Activated CD4-positive, alpha-beta T cell treated with anti-CD3 and anti-CD28 coated beads, Interleukin-2, amount 10 ng/mL, durations not matched to agents 7 days and 5 days (primary cell): ENCODE measurements at regions of chr17 and their contacts with region 1.

Region 1: GRCh38 chr17:74748529-74749365 is at the start of gene NHERF1:
- DNase-seq: peak; percentile 93
- H3K4me3 Mint-ChIP-seq: peak within 1 kb of the TSS; percentile 92
- H3K27ac Mint-ChIP-seq: peak within 1 kb of the TSS; percentile 84
- H3K4me1 Mint-ChIP-seq: peaks cover 65% of the 10 kb centered on the region
- H3K27me3 Mint-ChIP-seq: no peaks in the 10 kb centered on the region
- total RNA-seq, gene NHERF1: 254 to 281 TPM

Region 2: DNA sequence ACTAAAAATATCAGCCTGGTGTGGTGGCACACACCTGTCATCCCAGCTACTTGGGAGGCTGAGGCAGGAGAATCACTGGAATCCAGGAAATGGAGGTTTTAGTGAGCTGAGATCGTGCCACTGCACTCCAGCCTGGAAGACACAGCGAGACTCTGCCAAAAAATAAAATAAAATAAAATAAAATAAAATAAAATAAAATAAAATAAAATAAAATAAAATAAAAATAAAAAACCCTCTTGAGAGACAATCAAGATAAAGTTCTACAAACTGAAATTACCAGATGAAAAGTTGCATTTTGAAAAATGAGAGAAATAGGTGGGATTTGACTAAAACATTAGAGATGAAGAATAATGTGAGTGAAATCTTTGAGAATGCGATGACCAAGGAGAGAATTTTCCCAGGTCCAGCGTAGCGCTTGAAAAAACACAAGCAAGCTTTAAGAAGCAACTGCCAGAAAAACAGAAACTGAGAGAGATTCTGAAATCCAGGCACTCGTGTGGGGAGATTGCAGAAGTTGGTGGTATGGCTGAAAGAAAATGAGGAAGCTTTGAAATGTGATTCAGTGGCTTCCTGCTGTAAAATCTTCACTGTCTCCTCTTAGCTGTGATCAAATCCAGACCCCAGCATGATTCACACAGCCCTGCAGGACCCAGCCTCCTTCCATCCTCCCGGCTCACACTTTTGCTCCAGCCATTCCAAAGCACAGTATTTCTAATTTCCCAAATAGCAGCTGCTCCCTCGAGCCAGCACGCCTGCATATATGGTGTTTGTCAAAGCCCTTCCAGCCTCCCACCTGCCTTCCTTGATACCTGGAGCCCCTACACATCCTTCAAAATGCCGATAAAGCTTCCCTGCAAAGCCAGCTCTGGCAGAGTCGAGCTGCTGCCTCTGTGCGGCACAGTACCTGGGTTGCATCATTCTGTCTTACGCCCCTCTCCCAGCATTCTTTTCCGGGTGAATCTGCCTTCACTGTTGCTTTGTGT is 117.0 kb before region 1 on chr17:
- CTCF ChIA-PET with region 1: no interaction called
- POLR2A ChIA-PET with region 1: no interaction called
- DNase-seq: no peak
- H3K4me3 Mint-ChIP-seq: no peak overlapping the region
- H3K27ac Mint-ChIP-seq: no peak overlapping the region
- H3K4me1 Mint-ChIP-seq: peaks cover 9% of the 10 kb centered on the region
- H3K27me3 Mint-ChIP-seq: peaks cover 41% of the 10 kb centered on the region

Region 3: DNA sequence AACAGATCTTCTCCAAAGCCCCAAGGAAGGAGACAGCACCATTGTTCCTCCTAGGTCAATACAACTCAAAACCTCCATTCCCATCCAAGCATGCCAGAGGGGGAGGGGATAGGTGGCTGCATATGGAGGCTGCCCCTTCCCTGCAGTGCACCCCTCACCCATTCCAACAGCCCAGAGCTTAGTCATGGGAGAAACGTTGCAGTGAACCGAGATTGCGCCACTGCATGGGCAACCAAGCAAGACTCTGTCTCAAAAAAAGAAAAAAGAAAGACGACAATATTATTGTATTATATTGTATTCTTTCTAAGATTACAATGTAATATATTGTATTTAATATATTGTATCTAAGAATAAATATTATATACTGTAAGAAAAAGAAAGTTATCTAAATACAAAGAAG is 88.8 kb before region 1 on chr17:
- CTCF ChIA-PET with region 1: interaction called, 17 read pairs
- POLR2A ChIA-PET with region 1: interaction called, 6 read pairs
- DNase-seq: no peak
- H3K4me3 Mint-ChIP-seq: no peak overlapping the region
- H3K27ac Mint-ChIP-seq: no peak overlapping the region
- H3K4me1 Mint-ChIP-seq: peaks cover 9% of the 10 kb centered on the region
- H3K27me3 Mint-ChIP-seq: peaks cover 62% of the 10 kb centered on the region

Region 4: GRCh38 chr17:74759243-74759801 is 10.6 kb after region 1 on chr17:
- CTCF ChIA-PET with region 1: interaction called, 38 read pairs
- POLR2A ChIA-PET with region 1: no interaction called
- DNase-seq: peak; percentile 74
- H3K4me3 Mint-ChIP-seq: peak overlapping the region; percentile 71
- H3K27ac Mint-ChIP-seq: peak overlapping the region; percentile 80
- H3K4me1 Mint-ChIP-seq: peaks cover 70% of the 10 kb centered on the region
- H3K27me3 Mint-ChIP-seq: no peaks in the 10 kb centered on the region

Region 5: DNA sequence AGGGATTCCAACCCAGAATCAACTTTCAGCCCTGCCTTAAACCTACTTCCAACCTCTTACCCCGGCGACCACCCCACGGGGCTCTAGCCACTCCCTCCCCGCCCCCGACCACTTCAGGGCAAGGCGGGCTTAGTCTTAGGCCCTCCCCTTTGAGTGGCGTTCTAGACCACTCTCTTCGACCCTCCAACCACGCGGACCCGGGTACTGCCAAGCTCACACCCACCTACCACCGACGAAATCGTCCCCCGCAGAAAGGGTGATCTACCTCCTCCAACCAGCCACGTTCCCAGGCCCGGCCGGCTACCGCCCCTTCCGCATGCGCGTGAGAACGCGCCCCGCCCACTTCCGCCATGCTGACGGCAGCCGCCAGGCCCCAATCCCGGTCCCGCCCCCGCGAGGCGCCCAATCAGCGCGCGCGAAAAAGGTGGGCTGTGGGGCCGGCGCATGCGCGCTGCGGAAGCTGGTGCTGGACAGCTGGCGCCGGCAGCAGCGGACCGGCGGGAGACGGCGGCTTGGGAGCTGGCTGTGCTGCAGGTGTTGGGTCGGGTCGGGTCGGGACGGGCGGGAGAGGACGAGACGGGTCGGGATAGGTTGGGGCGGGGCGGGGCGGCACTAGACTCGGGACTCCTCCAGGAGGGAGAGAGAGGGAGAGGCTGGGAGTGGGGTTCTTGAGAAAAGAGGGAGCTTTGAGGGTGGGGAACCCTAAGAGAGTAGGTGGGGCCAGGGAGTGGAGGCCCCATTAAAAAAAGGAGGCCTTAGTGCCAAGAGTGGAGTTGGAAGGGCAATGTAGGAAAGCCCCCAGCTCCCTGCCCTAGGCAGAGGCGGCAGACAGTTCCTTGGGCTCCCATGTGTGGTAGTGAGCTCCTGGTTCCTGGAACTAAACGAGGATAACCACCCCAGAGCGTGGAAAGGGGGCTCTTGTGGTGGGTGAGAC is 27.6 kb after region 1 on chr17 and contains the start of gene NAT9:
- CTCF ChIA-PET with region 1: interaction called, 34 read pairs
- POLR2A ChIA-PET with region 1: no interaction called
- DNase-seq: peak; percentile 98
- H3K4me3 Mint-ChIP-seq: peak within 1 kb of the TSS; percentile 98
- H3K27ac Mint-ChIP-seq: peak within 1 kb of the TSS; percentile 90
- H3K4me1 Mint-ChIP-seq: peaks cover 74% of the 10 kb centered on the region
- H3K27me3 Mint-ChIP-seq: no peaks in the 10 kb centered on the region
- total RNA-seq, gene NAT9: 28.6 to 34.4 TPM

Region 6: DNA sequence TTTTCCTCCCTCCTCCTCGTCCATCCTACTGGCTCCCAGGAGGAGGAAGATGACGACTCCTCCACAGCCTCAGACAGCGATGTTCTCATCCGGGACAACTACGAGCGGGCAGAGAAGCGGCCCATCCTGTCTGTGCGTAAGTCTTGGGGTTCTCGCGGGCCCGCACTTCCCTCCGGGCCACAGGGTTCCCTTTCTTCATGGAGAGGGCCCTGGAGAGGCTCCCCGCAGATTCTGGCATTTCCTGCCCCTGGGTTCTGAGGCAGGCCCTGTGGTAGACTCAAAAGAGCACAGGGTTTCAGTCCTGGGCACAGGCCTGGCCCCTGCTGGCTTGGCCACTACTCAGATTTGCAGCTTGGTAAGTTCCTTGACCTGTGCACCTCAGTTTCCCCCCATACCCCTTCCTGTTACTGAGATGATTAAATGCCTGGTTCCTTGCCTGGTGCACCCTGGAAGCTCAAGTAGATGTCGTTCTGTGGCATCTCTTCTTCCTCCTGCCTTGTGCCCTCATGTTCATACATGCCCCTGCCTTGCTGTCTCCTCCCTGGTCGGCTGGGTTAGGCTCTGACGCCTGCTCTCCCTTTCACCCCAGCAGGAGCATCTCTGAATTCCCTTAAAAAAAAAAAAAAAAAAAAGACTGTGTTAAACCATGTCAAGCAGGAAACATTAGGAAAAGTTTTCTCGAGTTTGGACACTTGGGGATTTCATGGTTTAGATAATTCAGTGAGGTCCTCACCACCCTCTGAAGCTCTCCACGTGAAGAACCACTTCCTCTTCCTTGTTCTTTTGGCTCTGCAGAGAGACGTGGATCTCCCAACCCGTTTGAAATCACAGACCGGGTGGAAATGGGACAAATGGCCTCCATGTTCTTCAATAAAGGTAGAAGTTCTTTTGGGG is 41.7 kb after region 1 on chr17:
- CTCF ChIA-PET with region 1: interaction called, 17 read pairs
- POLR2A ChIA-PET with region 1: no interaction called
- DNase-seq: peak; percentile 16
- H3K4me3 Mint-ChIP-seq: peak overlapping the region; percentile 39
- H3K27ac Mint-ChIP-seq: peak overlapping the region; percentile 85
- H3K4me1 Mint-ChIP-seq: peaks cover 35% of the 10 kb centered on the region
- H3K27me3 Mint-ChIP-seq: no peaks in the 10 kb centered on the region